ENCODE measurements at regions of chr1 and their contacts with region 1.

Region 1: GRCh38 chr1:40709100-40709801 is 17.7 kb downstream of the NFYC start:
- DNase-seq: peak; percentile 97
- H3K4me3 Mint-ChIP-seq: peak overlapping the region; percentile 97
- H3K27ac Mint-ChIP-seq: peak overlapping the region; percentile 90
- H3K4me1 Mint-ChIP-seq: peaks cover 26% of the 10 kb centered on the region
- H3K27me3 Mint-ChIP-seq: no peaks in the 10 kb centered on the region
- CTCF ChIP-seq: no peak

Region 2: GRCh38 chr1:40318970-40319621 is 390.2 kb before region 1 on chr1:
- CTCF ChIA-PET with region 1: no interaction called
- POLR2A ChIA-PET with region 1: no interaction called
- intact Hi-C with region 1: no loop called
- DNase-seq: no peak
- H3K4me3 Mint-ChIP-seq: no peak overlapping the region
- H3K27ac Mint-ChIP-seq: no peak overlapping the region
- H3K4me1 Mint-ChIP-seq: peaks cover 7% of the 10 kb centered on the region
- H3K27me3 Mint-ChIP-seq: peaks cover 34% of the 10 kb centered on the region
- CTCF ChIP-seq: no peak

Region 3: GRCh38 chr1:40722636-40723035 is 13.4 kb after region 1 on chr1:
- CTCF ChIA-PET with region 1: interaction called, 7 read pairs
- POLR2A ChIA-PET with region 1: interaction called, 633 read pairs
- intact Hi-C with region 1: no loop called
- DNase-seq: no peak
- H3K4me3 Mint-ChIP-seq: no peak overlapping the region
- H3K27ac Mint-ChIP-seq: no peak overlapping the region
- H3K4me1 Mint-ChIP-seq: no peaks in the 10 kb centered on the region
- H3K27me3 Mint-ChIP-seq: no peaks in the 10 kb centered on the region
- CTCF ChIP-seq: no peak

Region 4: GRCh38 chr1:40736085-40736531 is 26.9 kb after region 1 on chr1:
- CTCF ChIA-PET with region 1: interaction called, 3 read pairs
- POLR2A ChIA-PET with region 1: interaction called, 14 read pairs
- intact Hi-C with region 1: no loop called
- DNase-seq: peak; percentile 22
- H3K4me3 Mint-ChIP-seq: no peak overlapping the region
- H3K27ac Mint-ChIP-seq: no peak overlapping the region
- H3K4me1 Mint-ChIP-seq: peaks cover 21% of the 10 kb centered on the region
- H3K27me3 Mint-ChIP-seq: no peaks in the 10 kb centered on the region
- CTCF ChIP-seq: no peak

Region 5: DNA sequence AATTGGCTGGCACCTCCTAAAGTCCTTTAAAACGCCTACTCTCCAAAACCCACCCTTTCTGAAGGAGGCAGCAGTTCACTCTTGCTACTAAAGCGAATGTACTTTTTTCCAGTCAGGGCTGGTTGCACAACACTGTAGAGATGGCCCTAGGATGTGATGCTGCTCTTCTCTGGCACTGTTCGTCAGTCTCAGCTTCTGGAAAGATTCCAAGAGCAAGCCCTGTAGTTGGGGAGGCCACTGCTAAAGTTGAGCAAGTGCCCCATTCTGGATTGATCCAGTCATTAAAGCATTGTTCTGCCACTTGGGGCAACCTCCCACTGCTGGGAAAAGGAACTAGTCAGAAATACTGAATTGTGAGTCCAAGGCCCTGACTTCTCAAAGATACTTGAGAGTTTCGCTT is 45.8 kb after region 1 on chr1:
- CTCF ChIA-PET with region 1: interaction called, 5 read pairs
- POLR2A ChIA-PET with region 1: interaction called, 42 read pairs
- intact Hi-C with region 1: no loop called
- DNase-seq: peak; percentile 96
- H3K4me3 Mint-ChIP-seq: no peak overlapping the region
- H3K27ac Mint-ChIP-seq: peak overlapping the region; percentile 53
- H3K4me1 Mint-ChIP-seq: peaks cover 29% of the 10 kb centered on the region
- H3K27me3 Mint-ChIP-seq: no peaks in the 10 kb centered on the region
- CTCF ChIP-seq: no peak

Measured in MCF 10A (cell line).